Prostate gland (tissue), 2 donors: ENCODE measurements at regions of chr18 and their contacts with region 1.

Region 1: GRCh38 chr18:62522504-62523254 is at the start of gene ZCCHC2:
- DNase-seq: peak; percentile 98
- H3K4me3 ChIP-seq: peak within 1 kb of the TSS; percentile 84 to 85
- H3K27ac ChIP-seq: peak within 1 kb of the TSS; percentile 98
- H3K4me1 ChIP-seq: no peaks in the 10 kb centered on the region
- H3K27me3 ChIP-seq: no peaks in the 10 kb centered on the region
- CTCF ChIP-seq: peak in 2 of 4 experiments; percentile 2 to 17
- POLR2A ChIP-seq: peak; percentile 97
- total RNA-seq, gene ZCCHC2: 18.7 to 39.4 TPM

Region 2: GRCh38 chr18:62186774-62187542 is 335.7 kb before region 1 on chr18 and contains the starts of genes PIGN and RELCH:
- intact Hi-C with region 1: loop called (anchors 5 kb)
- DNase-seq: peak; percentile 99
- H3K4me3 ChIP-seq: peak within 1 kb of the TSS; percentile 75 to 98
- H3K27ac ChIP-seq: peak within 1 kb of the TSS; percentile 72 to 76
- H3K4me1 ChIP-seq: no peaks in the 10 kb centered on the region
- H3K27me3 ChIP-seq: no peaks in the 10 kb centered on the region
- CTCF ChIP-seq: peak in 2 of 4 experiments; percentile 8 to 10
- POLR2A ChIP-seq: peak; percentile 70
- total RNA-seq, gene PIGN: 30.3 to 39.6 TPM
- total RNA-seq, gene RELCH: 34.8 to 49.0 TPM

Region 3: GRCh38 chr18:62425465-62426195 is 97.0 kb before region 1 on chr18:
- intact Hi-C with region 1: loop called (anchors 5 kb)
- DNase-seq: peak; percentile 93
- H3K4me3 ChIP-seq: peak overlapping the region; percentile 13 to 19
- H3K27ac ChIP-seq: peak overlapping the region; percentile 72 to 73
- H3K4me1 ChIP-seq: no peaks in the 10 kb centered on the region
- H3K27me3 ChIP-seq: no peaks in the 10 kb centered on the region
- CTCF ChIP-seq: peak; percentile 35 to 93 (median 85)
- POLR2A ChIP-seq: no peak

Region 4: DNA sequence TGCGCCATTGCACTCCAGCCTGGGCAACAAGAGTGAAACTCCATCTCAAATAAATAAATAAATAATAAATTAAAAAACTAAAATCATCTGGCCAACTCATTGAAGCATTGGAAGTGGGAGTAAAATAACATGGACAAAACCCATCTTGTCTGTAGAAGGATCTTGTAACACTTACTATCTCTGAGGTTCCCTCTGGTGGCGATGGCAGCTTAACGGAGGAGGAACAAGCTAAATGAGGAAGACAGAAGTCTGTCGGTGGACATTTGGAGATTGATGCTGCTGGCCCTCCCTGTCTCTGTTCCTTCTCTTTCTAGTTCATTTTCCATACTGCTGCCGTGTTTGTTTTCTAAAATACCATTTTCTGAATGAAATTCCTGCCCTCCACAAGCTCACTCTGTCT is 43.5 kb after region 1 on chr18:
- intact Hi-C with region 1: loop called (anchors 5 kb)
- DNase-seq: peak; percentile 32
- H3K4me3 ChIP-seq: no peak overlapping the region
- H3K27ac ChIP-seq: no peak overlapping the region
- H3K4me1 ChIP-seq: no peaks in the 10 kb centered on the region
- H3K27me3 ChIP-seq: no peaks in the 10 kb centered on the region
- CTCF ChIP-seq: peak in 2 of 4 experiments; percentile 24 to 26
- POLR2A ChIP-seq: no peak

Region 5: DNA sequence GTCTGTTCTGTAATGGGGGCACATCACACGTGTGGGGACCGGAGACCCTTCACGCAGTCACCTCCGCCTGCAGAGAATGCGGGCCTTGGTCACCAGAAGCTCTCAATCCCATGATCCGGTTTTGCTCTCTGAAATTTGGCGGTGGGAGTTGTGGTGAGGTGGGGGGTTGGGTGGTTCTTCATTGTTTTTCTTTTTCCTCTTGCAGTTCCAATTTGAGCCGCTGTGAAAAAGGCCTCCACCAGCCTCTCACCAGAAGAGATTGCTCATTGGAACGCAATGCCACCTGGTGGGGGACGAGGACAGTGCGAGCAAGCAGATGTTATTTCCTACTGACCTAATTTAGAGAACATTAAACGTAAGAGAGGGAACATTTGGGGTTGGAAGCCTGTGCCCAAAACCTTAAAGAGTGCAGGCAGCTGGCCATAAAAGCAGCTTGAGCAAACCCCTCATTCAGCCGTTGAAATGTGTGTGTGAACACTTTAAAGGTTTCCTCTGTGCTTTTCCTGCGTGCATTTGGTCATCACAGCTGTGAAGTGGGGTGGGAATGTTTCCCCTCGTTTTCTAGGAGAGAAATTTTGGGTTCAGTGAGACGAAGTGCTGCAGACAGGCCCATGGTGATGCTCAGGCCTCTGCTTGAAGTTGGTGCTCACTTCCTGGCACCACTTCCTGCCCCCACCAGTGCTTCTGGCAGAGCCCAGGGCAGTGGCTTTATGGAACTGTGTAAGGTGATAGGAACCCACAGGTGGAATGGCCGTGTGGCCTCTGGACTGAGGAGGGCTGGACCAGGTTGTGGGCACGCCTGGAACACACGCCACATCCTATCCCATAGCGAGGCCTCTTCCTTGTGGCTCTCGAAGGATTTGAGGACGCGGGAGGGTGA is 61.8 kb after region 1 on chr18:
- intact Hi-C with region 1: loop called (anchors 5 kb)
- DNase-seq: peak; percentile 84
- H3K4me3 ChIP-seq: no peak overlapping the region
- H3K27ac ChIP-seq: no peak overlapping the region
- H3K4me1 ChIP-seq: no peaks in the 10 kb centered on the region
- H3K27me3 ChIP-seq: no peaks in the 10 kb centered on the region
- CTCF ChIP-seq: peak; percentile 87 to 99 (median 98)
- POLR2A ChIP-seq: no peak

Region 6: GRCh38 chr18:63422087-63422809 is 899.6 kb after region 1 on chr18 and contains the start of gene VPS4B:
- intact Hi-C with region 1: loop called (anchors 10 kb)
- DNase-seq: peak; percentile 99
- H3K4me3 ChIP-seq: peak within 1 kb of the TSS; percentile 62 to 70
- H3K27ac ChIP-seq: peak within 1 kb of the TSS; percentile 90 to 93
- H3K4me1 ChIP-seq: no peaks in the 10 kb centered on the region
- H3K27me3 ChIP-seq: no peaks in the 10 kb centered on the region
- CTCF ChIP-seq: peak in 2 of 4 experiments; percentile 21 to 49
- POLR2A ChIP-seq: peak; percentile 82
- total RNA-seq, gene VPS4B: 28.3 to 31.7 TPM